PC-9 (cell line): ENCODE measurements at regions of chr6 and their contacts with region 1.

Region 1: DNA sequence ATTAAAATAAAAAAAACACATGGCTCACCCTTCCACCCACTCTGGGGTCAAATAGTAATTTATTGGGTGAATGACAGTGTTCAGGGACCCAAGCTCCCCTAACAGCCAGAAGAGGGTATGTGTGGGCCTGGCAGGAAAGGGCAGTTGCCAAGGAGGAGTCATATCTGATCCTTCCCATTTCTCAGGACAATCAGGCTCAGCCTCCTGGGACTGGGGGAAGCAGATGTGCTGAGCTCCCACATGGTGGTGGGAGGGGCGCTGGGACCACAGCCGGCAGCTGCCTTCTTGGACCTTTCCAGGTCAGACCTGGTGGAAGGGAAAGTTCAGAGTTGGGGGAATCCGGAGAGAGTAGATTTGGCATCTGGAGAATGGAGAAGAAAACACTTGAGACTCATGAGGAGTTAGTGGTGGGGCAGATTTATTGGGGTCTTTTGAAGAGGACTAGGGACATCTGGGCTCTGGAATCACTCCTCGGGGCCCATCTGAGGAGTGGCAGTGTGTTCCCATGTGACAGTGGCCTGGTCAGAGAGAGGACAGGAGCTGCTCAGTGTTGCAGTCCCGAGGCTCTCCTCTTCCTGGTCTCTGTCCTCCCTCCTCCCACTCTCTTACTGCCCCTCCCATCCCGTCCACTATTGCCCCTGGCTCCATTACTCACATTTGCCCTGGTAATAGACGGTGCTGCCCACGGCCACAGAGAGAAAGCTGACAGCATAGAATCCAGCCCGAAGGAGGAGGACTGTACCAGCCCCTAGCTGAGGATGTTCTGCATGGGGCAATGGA is 3.0 kb downstream of the LST1 start:
- DNase-seq: no peak
- H3K4me3 ChIP-seq: no peak overlapping the region
- H3K27ac ChIP-seq: no peak overlapping the region
- H3K4me1 ChIP-seq: no peaks in the 10 kb centered on the region
- H3K27me3 ChIP-seq: no peaks in the 10 kb centered on the region
- CTCF ChIP-seq: no peak

Region 2: DNA sequence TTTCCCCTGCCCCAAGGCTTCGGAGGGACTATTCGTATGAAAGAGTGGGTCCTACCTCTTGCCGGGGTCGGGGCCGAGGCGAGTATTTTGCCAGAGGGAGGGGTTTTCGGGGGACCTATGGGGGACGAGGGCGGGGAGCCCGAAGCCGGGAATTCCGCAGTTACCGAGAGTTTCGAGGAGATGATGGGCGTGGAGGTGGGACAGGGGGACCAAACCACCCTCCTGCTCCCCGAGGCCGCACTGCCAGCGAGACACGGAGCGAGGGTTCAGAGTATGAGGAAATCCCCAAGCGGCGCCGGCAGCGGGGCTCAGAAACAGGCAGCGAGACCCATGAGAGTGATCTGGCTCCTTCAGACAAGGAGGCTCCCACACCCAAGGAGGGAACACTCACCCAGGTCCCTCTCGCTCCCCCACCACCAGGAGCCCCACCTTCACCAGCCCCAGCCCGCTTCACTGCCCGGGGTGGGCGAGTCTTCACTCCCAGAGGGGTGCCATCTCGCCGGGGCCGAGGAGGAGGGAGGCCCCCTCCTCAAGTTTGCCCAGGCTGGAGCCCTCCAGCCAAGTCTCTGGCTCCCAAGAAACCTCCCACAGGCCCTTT is 42.7 kb after region 1 on chr6:
- CTCF ChIA-PET with region 1: no interaction called
- POLR2A ChIA-PET with region 1: no interaction called
- intact Hi-C with region 1: no loop called
- DNase-seq: no peak
- H3K4me3 ChIP-seq: no peak overlapping the region
- H3K27ac ChIP-seq: no peak overlapping the region
- H3K4me1 ChIP-seq: no peaks in the 10 kb centered on the region
- H3K27me3 ChIP-seq: no peaks in the 10 kb centered on the region
- CTCF ChIP-seq: no peak

Region 3: GRCh38 chr6:31660381-31661261 is 71.6 kb after region 1 on chr6 and contains the start of gene C6orf47:
- CTCF ChIA-PET with region 1: interaction called, 13 read pairs
- POLR2A ChIA-PET with region 1: no interaction called
- intact Hi-C with region 1: no loop called
- DNase-seq: peak; percentile 66 to 82
- H3K4me3 ChIP-seq: peak within 1 kb of the TSS; percentile 79
- H3K27ac ChIP-seq: peak within 1 kb of the TSS; percentile 71
- H3K4me1 ChIP-seq: peaks cover 26% of the 10 kb centered on the region
- H3K27me3 ChIP-seq: no peaks in the 10 kb centered on the region
- CTCF ChIP-seq: no peak
- total RNA-seq, gene C6orf47: 17.2 and 17.8 TPM in 2 replicates